ENCODE measurements at regions of chr15 and their contacts with region 1.

Region 1: GRCh38 chr15:27358751-27359434 is 387.9 kb downstream of the GABRG3 start:
- DNase-seq: peak in 1 of 2 donors; percentile 63
- H3K4me3 ChIP-seq: no peak overlapping the region
- H3K27ac ChIP-seq: no peak overlapping the region
- H3K4me1 ChIP-seq: peaks cover 0 to 5% (median 2%) of the 10 kb centered on the region in 4 donors
- H3K27me3 ChIP-seq: peaks cover 0 to 13% (median 0%) of the 10 kb centered on the region in 3 donors
- CTCF ChIP-seq: peak in 4 of 7 experiments; percentile 27 to 65 (median 46)
- EP300 ChIP-seq: no peak
- POLR2A ChIP-seq: no peak

Region 2: DNA sequence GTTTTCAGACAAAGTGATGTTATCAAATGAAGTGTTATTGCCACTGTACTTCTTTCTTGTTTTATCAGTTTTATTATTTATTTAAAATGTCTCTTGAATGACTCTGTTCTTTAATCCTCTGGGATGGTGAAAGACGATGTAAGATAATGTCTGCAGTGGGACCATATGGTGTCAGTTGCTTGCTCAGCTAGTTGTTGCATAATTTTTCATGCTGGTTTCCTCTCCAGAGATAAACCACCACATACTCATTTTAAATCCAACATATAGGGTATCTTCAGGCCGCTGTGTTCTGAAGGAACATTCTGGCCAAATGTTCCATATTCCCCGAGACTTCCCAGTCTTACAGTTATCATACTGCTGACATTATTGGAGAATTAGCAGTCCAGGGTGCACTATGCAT is 312.0 kb before region 1 on chr15:
- intact Hi-C with region 1: no loop called
- DNase-seq: no peak
- H3K4me3 ChIP-seq: no peak overlapping the region
- H3K27ac ChIP-seq: no peak overlapping the region
- H3K4me1 ChIP-seq: no peaks in the 10 kb centered on the region
- H3K27me3 ChIP-seq: no peaks in the 10 kb centered on the region
- CTCF ChIP-seq: no peak
- EP300 ChIP-seq: no peak
- POLR2A ChIP-seq: no peak

Region 3: GRCh38 chr15:27250223-27250622 is 108.7 kb before region 1 on chr15:
- intact Hi-C with region 1: no loop called
- DNase-seq: peak in 1 of 2 donors; percentile 32
- H3K4me3 ChIP-seq: no peak overlapping the region
- H3K27ac ChIP-seq: no peak overlapping the region
- H3K4me1 ChIP-seq: no peaks in the 10 kb centered on the region
- H3K27me3 ChIP-seq: no peaks in the 10 kb centered on the region
- CTCF ChIP-seq: no peak
- EP300 ChIP-seq: no peak
- POLR2A ChIP-seq: no peak

Region 4: DNA sequence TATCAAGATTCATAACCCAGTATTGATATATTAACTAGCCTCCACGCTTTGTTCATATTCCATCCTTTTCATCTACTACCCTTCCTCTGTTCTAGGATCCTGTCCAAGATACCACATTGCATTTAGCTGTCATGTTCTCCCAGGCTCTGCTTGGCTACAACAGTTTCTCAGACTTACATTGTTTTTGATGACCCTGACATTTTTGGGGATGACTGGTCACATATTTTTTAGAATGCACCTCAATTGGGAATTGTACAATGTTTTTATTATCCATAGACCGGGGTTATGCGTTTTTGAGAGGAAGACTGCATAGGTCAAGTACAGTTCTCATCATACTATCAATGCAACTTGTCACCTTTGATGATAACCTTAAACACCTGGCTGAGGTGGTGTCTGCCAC is 33.3 kb after region 1 on chr15:
- intact Hi-C with region 1: loop called (anchors 5 kb)
- DNase-seq: no peak
- H3K4me3 ChIP-seq: no peak overlapping the region
- H3K27ac ChIP-seq: no peak overlapping the region
- H3K4me1 ChIP-seq: no peaks in the 10 kb centered on the region
- H3K27me3 ChIP-seq: no peaks in the 10 kb centered on the region
- CTCF ChIP-seq: no peak
- EP300 ChIP-seq: no peak
- POLR2A ChIP-seq: no peak

Region 5: DNA sequence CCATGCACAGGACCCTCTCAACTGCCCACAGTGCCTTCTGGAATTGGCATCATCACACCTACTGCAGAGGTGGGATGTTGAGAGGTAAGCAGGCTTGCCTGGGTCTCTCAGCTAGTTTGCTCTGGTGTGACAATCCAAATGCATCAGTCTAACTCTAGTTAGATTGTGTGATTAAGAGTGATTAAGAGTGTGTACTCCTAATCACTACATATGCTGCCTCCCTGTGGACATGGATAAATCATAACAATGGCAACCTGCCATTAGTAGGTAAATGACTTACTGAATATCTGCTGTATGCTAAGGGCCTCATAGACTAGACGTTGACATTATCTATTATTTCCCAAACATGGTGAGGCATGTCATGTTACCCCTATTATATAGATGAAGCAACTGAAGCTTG is 398.2 kb after region 1 on chr15:
- intact Hi-C with region 1: no loop called
- DNase-seq: no peak
- H3K4me3 ChIP-seq: no peak overlapping the region
- H3K27ac ChIP-seq: no peak overlapping the region
- H3K4me1 ChIP-seq: no peaks in the 10 kb centered on the region
- H3K27me3 ChIP-seq: no peaks in the 10 kb centered on the region
- CTCF ChIP-seq: no peak
- EP300 ChIP-seq: no peak
- POLR2A ChIP-seq: no peak

Measured in stomach (tissue), 19 donors.